ENCODE measurements at regions of chr5 and their contacts with region 1.

Region 1: DNA sequence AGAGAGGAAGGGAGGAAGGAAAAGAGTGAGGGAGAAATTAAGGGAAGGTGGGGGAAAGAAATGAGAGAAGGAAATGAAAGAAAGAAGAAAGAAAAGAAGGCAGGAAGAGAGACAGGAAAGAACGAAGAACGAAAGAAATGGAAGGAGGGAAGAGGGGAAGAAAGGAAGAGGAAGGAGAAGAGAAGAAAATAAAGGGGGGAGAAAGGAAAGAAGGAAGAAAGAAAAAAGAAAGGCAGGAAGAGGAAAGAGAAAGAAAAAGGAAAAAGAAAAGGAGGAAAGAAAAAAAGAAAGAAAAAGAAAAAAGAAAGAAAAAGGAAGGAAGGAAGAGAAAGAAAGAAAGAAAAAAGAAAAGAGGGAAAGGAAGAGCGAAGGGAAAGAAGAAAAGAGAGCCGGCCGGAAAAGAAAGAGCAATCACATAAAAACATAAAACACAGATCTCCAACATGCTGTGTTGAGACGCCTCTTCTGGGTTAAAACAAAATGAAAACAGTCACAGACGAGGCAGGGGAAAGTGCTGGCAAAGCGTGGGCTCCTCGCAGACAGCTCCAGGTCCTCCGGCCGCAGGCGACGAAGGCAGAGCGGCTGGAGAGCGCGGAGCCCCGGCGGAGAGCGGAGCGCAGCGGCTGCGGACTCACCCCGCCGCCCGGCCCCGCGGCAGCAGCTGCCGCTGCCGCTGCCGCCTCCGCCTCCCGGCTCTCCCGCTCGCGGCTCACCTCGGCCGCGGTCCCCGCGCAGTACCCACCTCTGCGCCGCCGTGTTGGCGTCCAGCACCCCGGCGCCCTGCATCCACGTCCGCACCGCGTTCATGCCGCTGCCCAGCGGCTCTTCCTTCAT is 896 bp downstream of the EBF1 start:
- DNase-seq: peak; percentile 41
- H3K4me3 Mint-ChIP-seq: peak overlapping the region; percentile 52
- H3K27ac Mint-ChIP-seq: no peak overlapping the region
- H3K4me1 Mint-ChIP-seq: peaks cover 20% of the 10 kb centered on the region
- H3K27me3 Mint-ChIP-seq: peaks cover 68% of the 10 kb centered on the region
- CTCF ChIP-seq: no peak

Region 2: GRCh38 chr5:158967541-158967940 is 131.3 kb before region 1 on chr5:
- CTCF ChIA-PET with region 1: no interaction called
- intact Hi-C with region 1: no loop called
- DNase-seq: no peak
- H3K4me3 Mint-ChIP-seq: no peak overlapping the region
- H3K27ac Mint-ChIP-seq: no peak overlapping the region
- H3K4me1 Mint-ChIP-seq: no peaks in the 10 kb centered on the region
- H3K27me3 Mint-ChIP-seq: no peaks in the 10 kb centered on the region
- CTCF ChIP-seq: no peak

Region 3: GRCh38 chr5:159003037-159004030 is 95.5 kb before region 1 on chr5:
- CTCF ChIA-PET with region 1: interaction called, 3 read pairs
- intact Hi-C with region 1: loop called (anchors 10 kb)
- DNase-seq: peak; percentile 47
- H3K4me3 Mint-ChIP-seq: no peak overlapping the region
- H3K27ac Mint-ChIP-seq: no peak overlapping the region
- H3K4me1 Mint-ChIP-seq: peaks cover 19% of the 10 kb centered on the region
- H3K27me3 Mint-ChIP-seq: peaks cover 13% of the 10 kb centered on the region
- CTCF ChIP-seq: no peak